Psoas muscle (tissue), 8 donors: ENCODE measurements at regions of chr17 and their contacts with region 1.

Region 1: DNA sequence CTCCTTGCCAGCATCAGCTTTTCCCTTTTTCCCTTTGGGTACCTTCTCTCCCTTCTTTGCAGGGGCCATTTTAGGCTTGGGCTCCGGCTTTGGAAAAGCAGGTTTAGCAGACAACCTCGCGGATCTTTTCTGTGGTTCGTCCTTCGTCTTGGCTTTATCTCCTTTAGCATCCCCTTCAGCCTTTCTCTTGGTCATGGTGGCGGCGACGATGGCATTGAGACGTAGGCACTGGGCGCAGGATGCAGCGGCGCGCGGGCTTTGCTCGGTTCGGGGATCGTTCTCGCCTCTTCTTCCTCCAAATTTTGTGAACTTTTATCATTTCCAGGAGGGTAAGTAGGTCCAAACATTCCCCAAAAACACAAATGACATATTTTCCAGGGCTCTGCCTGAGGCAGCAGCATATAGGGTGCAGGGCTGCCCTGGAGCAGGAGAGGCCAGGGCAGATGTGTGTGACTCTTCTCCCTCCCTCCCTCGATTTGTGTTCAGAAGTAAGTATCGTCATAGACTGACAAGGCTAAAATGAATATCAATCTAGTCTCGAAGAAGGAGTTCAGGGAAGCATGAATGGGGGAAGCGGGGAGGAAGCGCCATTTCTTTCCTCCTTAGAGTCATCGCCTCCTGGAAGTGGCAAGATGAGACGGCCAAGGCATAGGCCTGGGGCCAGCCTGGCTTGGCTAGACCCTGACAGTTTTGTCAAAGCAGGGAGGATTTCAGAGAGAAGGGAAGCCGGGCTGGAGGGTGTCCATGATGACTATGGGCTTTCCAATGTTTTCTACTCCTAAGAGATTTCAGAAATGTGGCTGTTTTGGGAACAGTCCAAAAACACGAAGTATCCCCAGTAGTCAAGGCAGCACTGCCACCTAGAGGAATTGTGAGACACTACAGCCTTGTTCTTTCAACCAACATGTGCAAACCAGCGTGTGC is 13.2 kb downstream of the CHCT1 start:
- DNase-seq: peak; percentile 73 to 82
- ATAC-seq: peak; percentile 87 to 94 (median 92)
- H3K4me3 ChIP-seq: peak overlapping the region; percentile 39
- H3K27ac ChIP-seq: peak overlapping the region; percentile 41
- H3K4me1 ChIP-seq: no peaks in the 10 kb centered on the region
- H3K27me3 ChIP-seq: no peaks in the 10 kb centered on the region
- CTCF ChIP-seq: peak; percentile 94

Region 2: GRCh38 chr17:60102632-60103096 is 332.8 kb before region 1 on chr17:
- intact Hi-C with region 1: loop called in 1 of 2 experiments (anchors 10 kb)
- DNase-seq: peak in 1 of 2 donors; percentile 54
- ATAC-seq: no peak
- H3K4me3 ChIP-seq: peak overlapping the region; percentile 22
- H3K27ac ChIP-seq: no peak overlapping the region
- H3K4me1 ChIP-seq: no peaks in the 10 kb centered on the region
- H3K27me3 ChIP-seq: no peaks in the 10 kb centered on the region
- CTCF ChIP-seq: no peak

Region 3: GRCh38 chr17:60142872-60143499 is 292.5 kb before region 1 on chr17:
- intact Hi-C with region 1: loop called (anchors 2 to 10 kb)
- DNase-seq: peak; percentile 83 to 86
- ATAC-seq: peak; percentile 63 to 87 (median 73)
- H3K4me3 ChIP-seq: peak overlapping the region; percentile 26
- H3K27ac ChIP-seq: no peak overlapping the region
- H3K4me1 ChIP-seq: peaks cover 15% of the 10 kb centered on the region
- H3K27me3 ChIP-seq: peaks cover 0 to 74% (median 29%) of the 10 kb centered on the region in 3 donors
- CTCF ChIP-seq: peak; percentile 69

Region 4: GRCh38 chr17:60231691-60232090 is 203.8 kb before region 1 on chr17:
- intact Hi-C with region 1: loop called in 1 of 2 experiments (anchors 2 kb)
- DNase-seq: no peak
- ATAC-seq: no peak
- H3K4me3 ChIP-seq: no peak overlapping the region
- H3K27ac ChIP-seq: no peak overlapping the region
- H3K4me1 ChIP-seq: no peaks in the 10 kb centered on the region
- H3K27me3 ChIP-seq: no peaks in the 10 kb centered on the region
- CTCF ChIP-seq: no peak